ENCODE measurements at regions of chr9 and their contacts with region 1.

Region 1: GRCh38 chr9:80175286-80176150 is 603.8 kb downstream of the TLE4 start:
- DNase-seq: peak in 3 of 14 experiments; percentile 20 to 32 (median 30)
- ATAC-seq: no peak
- H3K4me3 ChIP-seq: no peak overlapping the region
- H3K4me3 Mint-ChIP-seq: no peak overlapping the region
- H3K27ac ChIP-seq: no peak overlapping the region
- H3K27ac Mint-ChIP-seq: no peak overlapping the region
- H3K4me1 ChIP-seq: no peaks in the 10 kb centered on the region
- H3K4me1 Mint-ChIP-seq: no peaks in the 10 kb centered on the region
- H3K27me3 ChIP-seq: no peaks in the 10 kb centered on the region
- H3K27me3 Mint-ChIP-seq: no peaks in the 10 kb centered on the region
- CTCF ChIP-seq: peak; percentile 60

Region 2: GRCh38 chr9:79471580-79472543 is 703.7 kb before region 1 on chr9:
- CTCF ChIA-PET with region 1: no interaction called
- POLR2A ChIA-PET with region 1: no interaction called
- intact Hi-C with region 1: loop called (anchors 5 kb)
- DNase-seq: peak in 12 of 14 experiments; percentile 2 to 51 (median 22)
- ATAC-seq: peak; percentile 68
- H3K4me3 ChIP-seq: no peak overlapping the region
- H3K4me3 Mint-ChIP-seq: no peak overlapping the region
- H3K27ac ChIP-seq: no peak overlapping the region
- H3K27ac Mint-ChIP-seq: peak overlapping the region; percentile 70
- H3K4me1 ChIP-seq: no peaks in the 10 kb centered on the region
- H3K4me1 Mint-ChIP-seq: peaks cover 13% of the 10 kb centered on the region
- H3K27me3 ChIP-seq: no peaks in the 10 kb centered on the region
- H3K27me3 Mint-ChIP-seq: no peaks in the 10 kb centered on the region
- CTCF ChIP-seq: peak; percentile 2

Region 3: DNA sequence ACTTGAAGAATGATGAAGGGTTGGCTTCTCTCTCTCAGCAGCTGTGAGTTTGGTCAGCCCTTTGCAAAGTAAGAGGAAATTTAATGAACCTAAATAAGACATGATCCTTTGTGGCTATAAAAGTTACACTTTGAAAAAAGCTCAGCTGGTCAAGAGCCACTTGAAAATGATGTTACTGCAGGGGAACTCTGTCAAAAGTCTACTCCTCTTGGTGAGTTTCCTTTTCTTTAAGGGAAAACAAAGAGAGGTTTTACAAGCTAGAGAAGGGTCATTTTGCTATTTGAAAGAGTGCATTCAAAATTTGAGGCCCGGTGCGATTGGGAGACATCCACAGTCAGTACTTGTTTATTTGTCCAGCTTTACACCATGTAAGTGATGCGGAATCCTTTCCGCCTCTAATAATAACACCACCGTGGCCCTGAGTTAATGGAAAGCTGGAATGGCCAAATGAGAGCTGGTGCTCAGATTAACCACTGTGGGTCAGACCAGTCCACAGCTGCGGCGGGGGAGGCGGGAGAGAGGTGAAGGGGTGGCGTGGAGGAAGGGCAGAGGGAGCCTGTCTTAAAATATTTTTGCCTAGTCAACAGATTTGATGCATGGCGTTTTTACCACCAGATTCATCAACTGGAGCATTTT is 199.8 kb before region 1 on chr9:
- CTCF ChIA-PET with region 1: no interaction called
- POLR2A ChIA-PET with region 1: no interaction called
- intact Hi-C with region 1: no loop called
- DNase-seq: no peak
- ATAC-seq: no peak
- H3K4me3 ChIP-seq: no peak overlapping the region
- H3K4me3 Mint-ChIP-seq: no peak overlapping the region
- H3K27ac ChIP-seq: no peak overlapping the region
- H3K27ac Mint-ChIP-seq: no peak overlapping the region
- H3K4me1 ChIP-seq: no peaks in the 10 kb centered on the region
- H3K4me1 Mint-ChIP-seq: no peaks in the 10 kb centered on the region
- H3K27me3 ChIP-seq: no peaks in the 10 kb centered on the region
- H3K27me3 Mint-ChIP-seq: peaks cover 23% of the 10 kb centered on the region
- CTCF ChIP-seq: no peak